Mammary epithelial cell (primary cell): ENCODE measurements at regions of chr16 and their contacts with region 1.

Region 1: GRCh38 chr16:621528-622105 is 9.2 kb upstream of the WFIKKN1 start:
- DNase-seq: no peak
- H3K4me3 ChIP-seq: no peak overlapping the region
- H3K27ac ChIP-seq: no peak overlapping the region
- H3K4me1 ChIP-seq: peaks cover 26% of the 10 kb centered on the region
- H3K27me3 ChIP-seq: no peaks in the 10 kb centered on the region
- CTCF ChIP-seq: no peak

Region 2: GRCh38 chr16:569445-570254 is 52.0 kb before region 1 on chr16 and contains the start of gene PIGQ:
- CTCF ChIA-PET with region 1: no interaction called
- dilution Hi-C with region 1: loop called (anchors 5 kb)
- in situ Hi-C with region 1: no loop called
- intact Hi-C with region 1: no loop called
- DNase-seq: peak; percentile 55
- H3K4me3 ChIP-seq: peak within 1 kb of the TSS; percentile 52 to 79 (median 66)
- H3K27ac ChIP-seq: peak within 1 kb of the TSS; percentile 34
- H3K4me1 ChIP-seq: peaks cover 22% of the 10 kb centered on the region
- H3K27me3 ChIP-seq: no peaks in the 10 kb centered on the region
- CTCF ChIP-seq: no peak
- total RNA-seq, gene PIGQ: 24.7 to 45.5 TPM

Region 3: GRCh38 chr16:636206-637080 is 14.8 kb after region 1 on chr16 and contains the start of gene METTL26:
- CTCF ChIA-PET with region 1: interaction called, 4 read pairs
- dilution Hi-C with region 1: no loop called
- in situ Hi-C with region 1: no loop called
- intact Hi-C with region 1: loop called (anchors 1 kb)
- DNase-seq: peak; percentile 91
- H3K4me3 ChIP-seq: peak within 1 kb of the TSS; percentile 44 to 94 (median 85)
- H3K27ac ChIP-seq: peak within 1 kb of the TSS; percentile 33
- H3K4me1 ChIP-seq: peaks cover 14% of the 10 kb centered on the region
- H3K27me3 ChIP-seq: no peaks in the 10 kb centered on the region
- CTCF ChIP-seq: peak in 1 of 2 donors; percentile 10
- total RNA-seq, gene METTL26: 43.3 to 95.7 TPM

Region 4: GRCh38 chr16:679814-680622 is 58.4 kb after region 1 on chr16 and contains the start of gene STUB1:
- CTCF ChIA-PET with region 1: no interaction called
- dilution Hi-C with region 1: no loop called
- in situ Hi-C with region 1: no loop called
- intact Hi-C with region 1: no loop called
- DNase-seq: peak; percentile 75
- H3K4me3 ChIP-seq: peak within 1 kb of the TSS; percentile 72 to 81 (median 76)
- H3K27ac ChIP-seq: peak within 1 kb of the TSS; percentile 45
- H3K4me1 ChIP-seq: peaks cover 73% of the 10 kb centered on the region
- H3K27me3 ChIP-seq: no peaks in the 10 kb centered on the region
- CTCF ChIP-seq: no peak
- total RNA-seq, gene STUB1: 126 to 156 TPM

Region 5: DNA sequence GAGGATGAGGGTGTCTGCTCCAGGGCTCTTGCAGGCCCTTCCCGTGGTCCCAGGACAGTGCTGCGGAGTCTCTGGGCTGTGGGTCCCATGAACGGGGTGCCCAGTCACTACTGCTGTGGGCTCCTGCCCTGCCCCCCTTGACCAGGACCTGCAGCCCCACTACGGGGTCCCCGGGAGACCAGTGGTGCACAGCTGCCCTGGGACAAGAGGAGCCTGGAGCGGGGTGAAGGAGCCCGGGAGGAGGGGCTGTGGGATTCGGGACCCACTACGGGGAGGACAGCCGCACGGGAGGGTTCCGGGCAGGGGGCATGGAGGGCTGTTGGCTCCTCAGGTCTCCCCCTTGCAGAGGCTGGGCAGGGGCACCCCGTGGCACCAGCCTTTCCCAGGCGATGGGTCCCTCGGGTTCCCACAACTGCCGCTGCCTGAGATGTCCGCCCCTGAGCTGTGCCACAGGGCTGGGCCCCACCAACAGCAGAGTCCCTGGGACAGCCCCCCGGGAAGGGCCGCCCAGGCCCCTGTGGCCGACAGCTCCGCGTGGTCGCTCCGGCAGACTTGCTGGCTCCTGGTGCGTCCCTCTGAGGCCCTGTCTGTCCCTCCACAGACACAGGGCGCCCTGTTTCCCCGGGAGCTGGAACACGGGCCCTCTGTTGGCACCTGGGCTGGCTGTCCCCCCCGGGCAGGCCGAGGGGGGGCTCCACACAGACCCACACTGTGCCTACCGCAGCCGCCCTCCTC is 231.0 kb after region 1 on chr16:
- CTCF ChIA-PET with region 1: no interaction called
- dilution Hi-C with region 1: no loop called
- in situ Hi-C with region 1: no loop called
- intact Hi-C with region 1: no loop called
- DNase-seq: no peak
- H3K4me3 ChIP-seq: no peak overlapping the region
- H3K27ac ChIP-seq: no peak overlapping the region
- H3K4me1 ChIP-seq: no peaks in the 10 kb centered on the region
- H3K27me3 ChIP-seq: no peaks in the 10 kb centered on the region
- CTCF ChIP-seq: no peak